ENCODE measurements at regions of chr17 and their contacts with region 1.

Region 1: DNA sequence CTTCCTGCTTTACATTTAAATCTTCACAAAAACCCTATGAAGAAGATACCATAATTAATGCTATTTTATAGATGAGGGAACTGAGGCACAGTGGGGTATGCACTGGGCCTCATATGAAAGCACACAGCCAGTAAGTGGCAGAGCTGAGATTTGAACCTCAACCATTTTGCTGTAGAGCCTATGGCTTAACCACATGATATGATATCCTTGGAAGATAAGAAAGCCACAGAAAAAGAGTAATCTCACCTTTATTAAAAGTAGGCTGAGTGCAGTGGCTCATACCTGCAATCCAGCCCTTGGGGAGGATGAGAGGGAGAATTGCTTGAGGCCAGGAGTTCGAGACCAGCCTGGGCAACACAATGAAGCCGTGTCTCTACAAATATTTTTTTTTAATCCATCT is 15.0 kb upstream of the TOB1 start:
- DNase-seq: no peak
- H3K4me3 Mint-ChIP-seq: no peak overlapping the region
- H3K27ac Mint-ChIP-seq: no peak overlapping the region
- H3K4me1 Mint-ChIP-seq: peaks cover 7% of the 10 kb centered on the region
- H3K27me3 Mint-ChIP-seq: peaks cover 22% of the 10 kb centered on the region

Region 2: GRCh38 chr17:50861071-50861676 is 20.0 kb before region 1 on chr17:
- intact Hi-C with region 1: loop called (anchors 2 kb)
- DNase-seq: no peak
- H3K4me3 Mint-ChIP-seq: no peak overlapping the region
- H3K27ac Mint-ChIP-seq: no peak overlapping the region
- H3K4me1 Mint-ChIP-seq: peaks cover 25% of the 10 kb centered on the region
- H3K27me3 Mint-ChIP-seq: peaks cover 7% of the 10 kb centered on the region